ENCODE measurements at regions of chr15 and their contacts with region 1.

Region 1: GRCh38 chr15:41989259-41989933 is 17.0 kb upstream of the EHD4 start:
- DNase-seq: peak; percentile 91
- ATAC-seq: peak; percentile 88

Region 2: DNA sequence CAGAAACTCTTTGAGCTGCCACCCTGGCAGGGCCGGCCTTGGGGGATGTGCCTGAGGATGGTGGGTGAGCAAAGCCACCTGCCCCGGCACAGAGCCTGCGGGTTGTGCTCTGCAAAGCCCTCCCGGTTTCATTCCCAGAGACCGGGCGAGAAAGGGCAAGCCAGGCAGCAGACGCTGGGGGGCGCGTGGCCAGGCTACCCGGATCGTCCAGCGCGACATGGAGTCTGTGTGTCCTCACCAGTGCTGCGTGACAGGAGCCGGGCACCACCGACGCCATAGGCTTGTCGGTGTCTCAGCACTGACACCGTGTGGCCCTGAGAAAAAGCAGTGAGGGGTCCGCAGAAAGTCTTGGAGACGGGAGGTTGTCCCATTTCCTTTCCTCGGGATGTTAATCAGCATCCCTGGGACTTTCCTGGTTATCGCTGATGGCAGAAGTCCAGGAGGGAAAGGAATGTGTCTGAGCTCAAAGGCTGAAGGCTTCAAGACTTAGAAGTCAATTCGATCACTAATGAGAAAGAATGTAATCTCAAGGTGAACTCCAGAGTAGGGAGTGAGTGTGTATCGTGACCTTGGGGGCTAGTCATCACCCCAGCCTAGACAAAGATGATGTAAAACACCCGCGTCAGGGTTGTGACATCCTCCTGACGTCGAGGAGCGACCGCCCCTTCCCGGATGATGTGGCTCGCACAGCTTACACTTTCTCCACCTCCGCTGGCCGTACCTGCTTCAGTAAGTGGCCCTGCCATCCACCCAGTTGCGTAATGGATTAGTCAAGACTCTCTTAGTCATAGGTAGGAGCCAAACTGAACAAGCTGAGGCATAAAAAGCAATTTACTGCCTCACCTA is 67.8 kb after region 1 on chr15:
- intact Hi-C with region 1: loop called (anchors 1 kb)
- DNase-seq: peak; percentile 83
- ATAC-seq: peak; percentile 94